ENCODE measurements at regions of chr19 and their contacts with region 1.

Region 1: DNA sequence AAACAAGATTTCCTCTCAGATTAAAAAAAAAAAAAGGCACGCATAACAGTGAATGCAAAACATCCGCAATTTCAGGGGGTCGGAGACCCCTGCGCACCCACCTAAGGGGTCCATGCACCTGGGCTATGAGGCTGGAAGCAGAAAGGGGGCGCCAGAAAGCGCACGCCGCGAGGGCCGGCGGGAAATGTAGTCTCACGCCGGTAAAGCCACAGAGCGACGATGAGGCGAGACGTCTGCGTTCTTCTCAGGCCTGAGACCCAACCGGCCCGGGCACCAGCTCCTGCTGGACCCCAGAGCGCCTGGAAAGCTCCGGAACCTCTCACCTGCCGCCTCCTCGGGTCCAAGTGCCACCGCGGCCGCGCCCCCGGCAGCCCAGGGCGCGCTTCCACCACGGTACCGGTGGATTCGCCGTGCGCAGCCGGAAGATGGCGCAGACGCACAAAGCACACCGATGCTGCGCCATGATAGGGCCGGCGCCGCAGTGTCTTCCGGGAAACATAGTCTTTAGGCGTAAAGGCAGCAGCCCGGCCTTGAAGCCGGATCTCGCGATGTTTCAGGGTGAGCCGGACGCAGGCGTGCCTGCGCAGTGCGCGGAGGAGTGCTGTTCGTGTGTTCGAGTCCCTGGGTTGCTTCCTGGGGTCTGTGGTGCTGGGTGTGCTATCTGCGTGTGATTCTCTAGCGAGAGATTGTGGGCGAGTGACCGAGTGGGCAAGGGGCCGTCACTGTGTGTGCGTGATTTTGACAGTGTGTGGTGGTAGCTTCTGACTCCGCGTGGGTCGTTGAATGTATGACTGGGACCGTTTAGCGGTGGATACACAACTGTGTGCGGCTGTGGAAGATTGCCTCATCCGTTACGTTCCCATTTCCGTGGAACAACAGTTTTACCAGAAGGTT is at the start of gene ZNF582:
- DNase-seq: peak; percentile 84 to 96 (median 91)
- H3K4me3 ChIP-seq: peak within 1 kb of the TSS; percentile 88
- H3K4me3 Mint-ChIP-seq: peak within 1 kb of the TSS; percentile 91 to 100 (median 96)
- H3K27ac ChIP-seq: peak within 1 kb of the TSS; percentile 95
- H3K27ac Mint-ChIP-seq: peak within 1 kb of the TSS; percentile 78 to 97 (median 95)
- H3K4me1 ChIP-seq: peaks cover 7% of the 10 kb centered on the region
- H3K4me1 Mint-ChIP-seq: peaks cover 7 to 23% (median 12%) of the 10 kb centered on the region in 3 donors
- H3K27me3 ChIP-seq: no peaks in the 10 kb centered on the region
- H3K27me3 Mint-ChIP-seq: peaks cover 0 to 4% of the 10 kb centered on the region in 2 donors
- total RNA-seq, gene ZNF582: 2.1 to 2.6 TPM

Region 2: DNA sequence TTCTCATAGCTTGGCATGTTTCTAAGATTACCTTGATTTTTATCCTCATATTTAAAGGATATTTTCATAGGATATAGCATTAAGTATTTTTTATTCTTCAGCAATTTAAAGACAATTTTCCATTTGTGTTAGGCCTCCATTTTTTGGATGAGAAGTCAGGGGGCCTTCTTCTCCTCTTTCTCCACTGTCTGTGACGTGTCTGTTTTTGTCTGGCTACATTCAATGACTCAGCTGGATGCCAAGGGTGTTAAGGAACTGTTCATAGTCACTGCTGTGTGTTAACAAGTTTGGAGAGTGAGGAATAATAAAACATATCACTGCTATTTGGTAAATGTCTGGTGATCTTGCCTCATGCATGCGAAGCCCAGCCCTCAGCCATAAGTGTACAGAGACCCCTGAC is 36.4 kb before region 1 on chr19:
- CTCF ChIA-PET with region 1: no interaction called
- POLR2A ChIA-PET with region 1: no interaction called
- DNase-seq: no peak
- H3K4me3 ChIP-seq: no peak overlapping the region
- H3K4me3 Mint-ChIP-seq: no peak overlapping the region
- H3K27ac ChIP-seq: no peak overlapping the region
- H3K27ac Mint-ChIP-seq: peak overlapping the region in 1 of 8 donors; percentile 30
- H3K4me1 ChIP-seq: no peaks in the 10 kb centered on the region
- H3K4me1 Mint-ChIP-seq: no peaks in the 10 kb centered on the region
- H3K27me3 ChIP-seq: no peaks in the 10 kb centered on the region
- H3K27me3 Mint-ChIP-seq: peaks cover 0 to 3% of the 10 kb centered on the region in 2 donors

Region 3: DNA sequence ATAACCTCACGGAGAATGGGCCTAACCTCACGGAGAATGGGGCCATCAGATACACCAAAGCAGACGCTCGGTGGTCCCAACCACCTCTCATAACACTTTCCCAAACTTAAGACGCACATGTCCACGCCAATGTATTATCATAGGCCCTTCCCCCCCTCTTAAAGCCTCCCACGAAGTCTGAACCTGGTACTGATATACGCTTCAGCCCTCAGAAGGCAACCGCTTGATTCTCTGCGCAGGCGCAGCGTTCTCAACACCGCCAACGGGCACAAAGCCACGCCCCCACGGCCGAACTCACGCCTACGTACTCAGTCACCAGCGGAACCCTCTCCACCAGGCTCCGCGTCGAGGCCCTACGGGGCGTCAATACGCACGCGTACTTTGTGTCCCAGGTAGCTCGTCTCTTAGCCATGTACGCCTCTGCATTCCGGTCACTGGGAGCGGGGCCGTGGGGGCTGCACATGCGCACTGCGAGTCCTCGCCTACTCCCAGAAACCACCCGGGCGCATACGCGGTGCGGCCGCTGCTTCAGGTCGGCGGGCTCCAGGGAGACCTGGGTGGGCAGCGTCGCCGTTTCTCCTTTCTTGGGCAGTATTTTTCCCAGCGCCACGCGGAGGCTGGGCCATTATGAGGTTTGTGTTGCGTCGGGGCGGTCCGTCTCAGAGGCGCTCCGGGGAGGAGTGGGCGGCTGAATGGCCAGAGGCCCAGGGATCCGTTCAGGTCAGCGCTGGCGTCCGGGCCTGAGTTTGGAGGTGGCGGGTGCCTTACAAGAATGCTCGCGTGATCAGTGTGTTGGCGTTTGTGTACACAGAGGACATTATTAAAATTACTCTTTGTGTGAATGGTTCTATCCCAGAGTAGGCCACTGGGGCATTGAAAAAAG is 25.3 kb before region 1 on chr19:
- CTCF ChIA-PET with region 1: interaction called, 3 read pairs
- POLR2A ChIA-PET with region 1: interaction called, 17 read pairs
- DNase-seq: peak; percentile 56 to 83 (median 77)
- H3K4me3 ChIP-seq: peak overlapping the region; percentile 49
- H3K4me3 Mint-ChIP-seq: peak overlapping the region; percentile 83 to 94 (median 90)
- H3K27ac ChIP-seq: peak overlapping the region; percentile 44
- H3K27ac Mint-ChIP-seq: peak overlapping the region; percentile 2 to 92 (median 83)
- H3K4me1 ChIP-seq: peaks cover 9% of the 10 kb centered on the region
- H3K4me1 Mint-ChIP-seq: peaks cover 20 to 29% (median 22%) of the 10 kb centered on the region in 3 donors
- H3K27me3 ChIP-seq: no peaks in the 10 kb centered on the region
- H3K27me3 Mint-ChIP-seq: peaks cover 0 to 3% of the 10 kb centered on the region in 2 donors

Measured in CD8-positive, alpha-beta memory T cell (primary cell).